ENCODE measurements at regions of chr17 and their contacts with region 1.

Region 1: GRCh38 chr17:40564883-40565768 is at the start of gene CCR7:
- DNase-seq: peak; percentile 71 to 90 (median 84)
- ATAC-seq: peak; percentile 66 to 77 (median 72)
- H3K4me3 ChIP-seq: peak within 1 kb of the TSS; percentile 75 to 97
- H3K4me3 Mint-ChIP-seq: peak within 1 kb of the TSS; percentile 91 to 99 (median 93)
- H3K27ac ChIP-seq: peak within 1 kb of the TSS; percentile 89
- H3K27ac Mint-ChIP-seq: peak within 1 kb of the TSS; percentile 95 to 100
- H3K4me1 ChIP-seq: peaks cover 8 to 82% of the 10 kb centered on the region in 2 experiments
- H3K4me1 Mint-ChIP-seq: peaks cover 65 to 91% (median 79%) of the 10 kb centered on the region in 3 donors
- H3K27me3 ChIP-seq: peaks cover 0 to 6% of the 10 kb centered on the region in 2 experiments
- H3K27me3 Mint-ChIP-seq: no peaks in the 10 kb centered on the region
- total RNA-seq, gene CCR7: 173 to 438 (median 340) TPM

Region 2: GRCh38 chr17:40577611-40578065 is 12.5 kb after region 1 on chr17:
- CTCF ChIA-PET with region 1: interaction called in 1 of 2 experiments, 3 read pairs
- POLR2A ChIA-PET with region 1: interaction called in 1 of 2 experiments, 10 read pairs
- DNase-seq: peak in 1 of 35 experiments; percentile 72
- ATAC-seq: peak; percentile 5 to 76 (median 24)
- H3K4me3 ChIP-seq: no peak overlapping the region
- H3K4me3 Mint-ChIP-seq: peak overlapping the region; percentile 22 to 64 (median 44)
- H3K27ac ChIP-seq: peak overlapping the region; percentile 54
- H3K27ac Mint-ChIP-seq: peak overlapping the region; percentile 95
- H3K4me1 ChIP-seq: peaks cover 39 to 60% of the 10 kb centered on the region in 2 experiments
- H3K4me1 Mint-ChIP-seq: peaks cover 75 to 81% (median 78%) of the 10 kb centered on the region in 3 donors
- H3K27me3 ChIP-seq: no peaks in the 10 kb centered on the region
- H3K27me3 Mint-ChIP-seq: no peaks in the 10 kb centered on the region

Region 3: DNA sequence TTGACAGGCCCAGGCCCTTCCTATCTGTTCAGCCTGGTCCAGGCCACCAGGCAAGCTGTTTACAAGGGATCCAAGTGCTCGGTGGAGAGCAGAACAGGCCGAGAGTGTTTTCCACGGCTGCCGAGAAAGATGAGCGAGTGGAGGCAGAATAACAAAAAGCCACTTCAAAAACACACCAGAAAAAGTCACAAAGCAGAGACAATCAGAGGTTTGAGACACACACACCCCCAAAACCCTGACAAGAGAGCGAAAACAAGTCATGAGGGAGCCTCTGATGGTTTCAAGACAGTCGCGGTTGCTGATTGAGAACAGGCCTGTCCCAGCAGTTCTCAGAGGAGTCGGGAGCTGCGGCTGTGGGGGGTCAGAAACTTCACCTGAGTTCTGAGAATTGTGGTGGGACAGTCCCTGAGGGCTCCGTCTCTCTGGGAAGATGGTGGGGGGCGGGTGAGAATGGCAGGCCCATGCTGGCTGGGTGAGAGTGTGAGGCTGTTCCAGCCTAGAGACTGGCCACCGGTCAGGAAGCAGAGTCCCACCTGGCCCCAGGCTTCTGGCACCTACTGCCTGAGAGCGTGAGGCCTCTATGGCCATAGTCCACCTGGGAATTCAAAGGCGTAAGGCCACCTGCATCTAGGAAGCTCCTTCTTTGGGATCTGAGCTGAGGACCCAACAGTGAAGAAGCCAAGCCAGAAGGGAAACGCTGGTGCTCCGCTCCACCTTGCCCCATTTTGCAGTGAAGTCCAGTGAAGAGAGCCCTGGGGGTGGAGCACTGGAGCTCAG is 37.8 kb after region 1 on chr17:
- CTCF ChIA-PET with region 1: interaction called, 4 to 5 read pairs
- POLR2A ChIA-PET with region 1: interaction called, 10 to 12 read pairs
- DNase-seq: peak; percentile 42 to 90 (median 71)
- ATAC-seq: peak; percentile 54 to 65 (median 62)
- H3K4me3 ChIP-seq: peak overlapping the region in 1 of 2 donors; percentile 41
- H3K4me3 Mint-ChIP-seq: peak overlapping the region; percentile 72 to 77 (median 73)
- H3K27ac ChIP-seq: peak overlapping the region; percentile 99
- H3K27ac Mint-ChIP-seq: peak overlapping the region; percentile 99 to 100
- H3K4me1 ChIP-seq: peaks cover 84 to 94% of the 10 kb centered on the region in 2 experiments
- H3K4me1 Mint-ChIP-seq: peaks cover 94 to 99% (median 99%) of the 10 kb centered on the region in 3 donors
- H3K27me3 ChIP-seq: no peaks in the 10 kb centered on the region
- H3K27me3 Mint-ChIP-seq: no peaks in the 10 kb centered on the region

Region 4: DNA sequence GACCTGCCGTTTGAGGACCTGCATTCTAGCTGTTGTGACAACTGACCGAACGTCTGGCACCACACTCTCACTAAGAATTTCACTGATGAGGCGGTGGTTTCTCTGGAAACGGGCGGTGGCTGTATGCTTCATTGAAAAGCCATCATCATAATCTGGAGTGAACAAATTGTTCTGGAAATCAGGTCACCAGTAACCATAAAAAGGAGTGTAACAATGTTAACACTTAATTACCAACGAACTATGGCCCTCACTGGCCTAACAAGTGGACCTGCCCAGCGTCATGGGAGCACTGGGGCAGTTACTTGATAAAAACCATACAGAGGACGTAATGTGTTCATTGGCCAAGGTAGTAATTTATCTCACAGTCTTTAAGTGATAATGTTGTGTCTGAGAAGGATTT is 67.1 kb after region 1 on chr17:
- CTCF ChIA-PET with region 1: no interaction called
- POLR2A ChIA-PET with region 1: interaction called in 1 of 2 experiments, 13 read pairs
- DNase-seq: no peak
- ATAC-seq: no peak
- H3K4me3 ChIP-seq: no peak overlapping the region
- H3K4me3 Mint-ChIP-seq: no peak overlapping the region
- H3K27ac ChIP-seq: no peak overlapping the region
- H3K27ac Mint-ChIP-seq: no peak overlapping the region
- H3K4me1 ChIP-seq: no peaks in the 10 kb centered on the region
- H3K4me1 Mint-ChIP-seq: peaks cover 0 to 5% (median 0%) of the 10 kb centered on the region in 3 donors
- H3K27me3 ChIP-seq: no peaks in the 10 kb centered on the region
- H3K27me3 Mint-ChIP-seq: no peaks in the 10 kb centered on the region

Region 5: GRCh38 chr17:40738553-40738952 is 173.4 kb after region 1 on chr17:
- CTCF ChIA-PET with region 1: no interaction called
- POLR2A ChIA-PET with region 1: no interaction called
- DNase-seq: no peak
- ATAC-seq: no peak
- H3K4me3 ChIP-seq: no peak overlapping the region
- H3K4me3 Mint-ChIP-seq: no peak overlapping the region
- H3K27ac ChIP-seq: no peak overlapping the region
- H3K27ac Mint-ChIP-seq: no peak overlapping the region
- H3K4me1 ChIP-seq: no peaks in the 10 kb centered on the region
- H3K4me1 Mint-ChIP-seq: no peaks in the 10 kb centered on the region
- H3K27me3 ChIP-seq: peaks cover 2 to 16% of the 10 kb centered on the region in 2 experiments
- H3K27me3 Mint-ChIP-seq: peaks cover 29 to 34% of the 10 kb centered on the region in 2 donors